ENCODE measurements at regions of chr2 and their contacts with region 1.

Region 1: DNA sequence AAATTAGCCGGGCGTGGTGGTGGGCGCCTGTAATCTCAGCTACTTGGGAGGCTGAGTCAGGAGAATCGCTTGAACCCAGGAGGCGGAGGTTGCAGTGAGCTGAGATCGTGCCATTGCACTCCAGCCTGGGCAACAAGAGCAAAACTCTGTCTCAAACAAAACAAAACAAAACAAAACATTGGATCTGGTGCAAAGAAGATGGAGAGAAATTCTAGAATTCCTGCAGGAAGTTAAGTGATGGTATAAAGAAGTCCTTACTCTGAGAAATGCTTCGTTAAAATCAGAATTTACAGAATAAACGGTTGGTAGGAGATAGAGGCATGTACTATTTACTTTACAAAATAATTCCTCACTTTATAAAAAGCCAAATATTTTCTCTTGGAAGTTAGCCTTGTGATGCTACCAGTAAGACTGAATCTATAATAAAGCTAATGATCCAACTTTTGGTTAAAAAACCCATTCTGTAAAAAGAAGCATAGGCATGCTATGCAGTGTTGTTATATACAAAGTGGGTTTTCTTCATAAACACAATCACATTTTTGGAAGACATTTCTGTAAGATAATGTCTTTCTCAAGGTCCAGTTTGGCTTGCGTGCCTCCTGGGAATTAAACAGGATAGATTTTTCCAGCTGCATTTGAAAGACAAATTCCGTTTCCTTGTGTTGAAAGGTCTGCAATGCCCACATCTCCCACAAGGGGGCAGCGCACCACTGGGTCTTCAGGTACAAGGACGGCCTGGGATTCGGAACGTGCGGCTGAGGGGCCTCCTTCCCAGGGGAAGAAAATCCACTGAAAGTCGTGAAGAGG is 35.6 kb upstream of the PNO1 start:
- DNase-seq: peak; percentile 89
- ATAC-seq: peak; percentile 74 to 77

Region 2: GRCh38 chr2:67694445-67694844 is 427.6 kb before region 1 on chr2:
- intact Hi-C with region 1: no loop called
- DNase-seq: no peak
- ATAC-seq: no peak

Region 3: GRCh38 chr2:68282811-68283418 is 160.8 kb after region 1 on chr2:
- intact Hi-C with region 1: loop called in 1 of 2 experiments (anchors 2 kb)
- DNase-seq: no peak
- ATAC-seq: peak in 1 of 2 donors; percentile 41

Region 4: GRCh38 chr2:68441179-68441993 is 319.3 kb after region 1 on chr2:
- intact Hi-C with region 1: loop called in 1 of 2 experiments (anchors 5 kb)
- DNase-seq: peak; percentile 84
- ATAC-seq: peak; percentile 92 to 93

Measured in left cardiac atrium (tissue), 4 donors.